ENCODE measurements at regions of chr3 and their contacts with region 1.

Region 1: DNA sequence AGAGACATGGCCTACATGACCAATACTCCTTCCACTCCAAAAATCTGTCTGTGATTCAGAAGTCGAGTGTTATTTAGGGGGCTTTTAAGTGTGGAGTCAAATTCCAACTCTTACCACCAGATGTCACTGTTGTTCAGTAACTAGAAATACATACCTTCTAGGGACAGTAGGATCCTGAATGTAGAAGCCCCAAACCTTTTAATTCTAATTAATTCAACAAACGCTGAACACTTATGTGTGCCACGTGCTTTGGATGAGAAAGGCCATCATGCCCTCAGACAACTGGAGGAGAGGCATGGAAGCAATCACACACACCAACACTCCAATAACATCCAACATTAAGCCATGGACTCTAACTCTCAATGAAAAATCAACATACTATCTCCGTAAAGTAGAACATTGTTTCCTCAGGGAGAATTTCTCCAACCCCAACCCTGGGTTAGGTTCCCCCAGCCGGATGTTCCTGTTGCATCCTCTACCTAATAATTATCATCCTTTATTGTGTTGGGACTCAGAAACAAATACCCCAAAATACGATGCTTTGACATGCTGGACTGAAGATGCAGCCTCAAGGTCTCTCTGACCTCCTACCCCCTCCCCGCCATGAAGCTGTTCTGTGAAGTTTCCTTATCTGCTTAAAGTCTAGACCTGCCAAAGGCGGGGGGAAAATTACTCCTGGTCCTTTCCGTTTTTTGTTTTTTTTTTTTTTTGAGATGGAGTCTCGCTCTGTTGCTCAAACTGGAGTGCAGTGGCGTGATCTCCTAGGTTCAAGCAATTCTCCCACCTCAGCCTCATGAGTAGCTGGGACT is 8.0 kb upstream of the CCDC13 start:
- DNase-seq: no peak
- H3K4me3 ChIP-seq: no peak overlapping the region
- H3K27me3 ChIP-seq: no peaks in the 10 kb centered on the region
- CTCF ChIP-seq: peak; percentile 68

Region 2: GRCh38 chr3:42190701-42191462 is 590.2 kb before region 1 on chr3:
- CTCF ChIA-PET with region 1: no interaction called
- POLR2A ChIA-PET with region 1: no interaction called
- DNase-seq: no peak
- H3K4me3 ChIP-seq: no peak overlapping the region
- H3K27me3 ChIP-seq: no peaks in the 10 kb centered on the region
- CTCF ChIP-seq: peak; percentile 89

Region 3: DNA sequence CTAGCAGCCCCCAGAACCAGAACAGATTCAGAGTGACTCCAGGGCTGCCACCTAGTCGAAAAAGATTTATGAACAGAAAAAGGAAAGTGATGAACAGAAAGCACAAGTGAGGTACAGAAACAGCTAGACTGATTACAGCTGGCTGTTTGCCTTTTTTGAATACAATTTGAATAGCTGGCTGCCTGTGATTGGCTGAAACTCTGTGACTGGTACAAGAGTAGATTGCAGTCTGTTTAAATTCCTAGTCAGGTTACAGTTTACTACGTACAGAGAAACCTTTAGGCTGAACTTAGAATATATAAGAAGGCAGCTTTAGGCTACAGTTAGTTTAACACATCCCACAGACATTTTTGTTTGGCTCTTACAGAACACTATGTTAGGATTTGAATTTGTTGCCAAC is 18.1 kb before region 1 on chr3:
- CTCF ChIA-PET with region 1: interaction called, 11 read pairs
- POLR2A ChIA-PET with region 1: no interaction called
- DNase-seq: no peak
- H3K4me3 ChIP-seq: no peak overlapping the region
- H3K27me3 ChIP-seq: peaks cover 11% of the 10 kb centered on the region; the same call in 1 of the 2 replicates
- CTCF ChIP-seq: no peak

Region 4: DNA sequence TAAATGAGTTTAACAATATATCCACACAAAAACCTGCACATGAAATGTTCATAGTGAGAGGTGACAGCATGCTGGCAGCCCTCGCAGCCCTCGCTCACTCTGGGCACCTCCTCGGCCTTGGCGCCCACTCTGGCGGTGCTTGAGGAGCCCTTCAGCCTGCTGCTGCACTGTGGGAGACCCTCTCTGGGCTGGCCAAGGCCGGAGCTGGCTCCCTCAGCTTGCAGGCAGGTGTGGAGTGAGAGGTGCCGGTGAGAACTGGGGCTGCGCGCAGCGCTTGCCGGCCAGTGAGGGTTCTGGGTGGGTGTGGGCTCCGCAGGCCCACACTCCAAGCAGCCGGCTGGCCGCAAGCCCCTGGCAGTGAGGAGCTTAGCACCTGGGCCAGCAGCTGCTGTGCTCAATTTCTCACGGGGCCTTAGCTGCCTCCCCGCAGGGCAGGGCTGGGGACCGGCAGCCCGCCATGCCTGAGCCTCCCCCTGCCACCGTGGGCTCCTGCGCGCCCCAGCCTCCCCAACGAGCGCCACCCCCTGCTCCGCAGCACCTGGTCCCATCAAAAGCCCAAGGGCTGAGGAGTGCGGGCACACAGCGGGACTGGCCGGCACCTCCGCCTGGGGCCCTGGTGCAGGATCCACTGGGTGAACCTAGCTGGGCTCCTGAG is 11.5 kb before region 1 on chr3:
- CTCF ChIA-PET with region 1: interaction called, 10 read pairs
- POLR2A ChIA-PET with region 1: no interaction called
- DNase-seq: no peak
- H3K4me3 ChIP-seq: no peak overlapping the region
- H3K27me3 ChIP-seq: peaks cover 8% of the 10 kb centered on the region; the same call in 1 of the 2 replicates
- CTCF ChIP-seq: no peak

Region 5: DNA sequence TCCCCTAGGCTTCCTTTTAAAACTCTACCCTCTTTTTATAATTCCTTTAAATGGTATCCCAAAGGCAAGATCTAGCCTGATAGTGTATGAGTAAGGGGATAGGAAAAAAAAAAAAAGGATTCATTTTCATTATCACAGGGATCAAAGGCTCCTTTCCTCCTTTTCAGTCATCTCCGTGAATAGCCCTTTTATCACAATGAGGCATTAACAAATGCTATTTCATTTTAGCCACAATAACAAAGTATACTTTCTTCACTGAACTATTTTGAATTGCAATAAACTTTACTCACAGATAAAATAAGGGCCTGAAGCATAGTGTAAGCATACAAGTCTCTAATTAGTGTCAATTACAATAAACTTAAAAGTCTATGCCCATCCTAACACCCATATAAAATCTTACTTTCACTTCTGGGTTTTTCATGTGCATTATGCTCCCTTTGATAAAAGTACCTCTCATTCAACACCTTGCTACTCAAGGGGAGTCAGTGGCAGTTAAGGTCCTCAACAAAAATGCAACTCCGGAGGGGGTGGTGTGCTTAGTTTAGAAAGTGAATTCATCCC is 14.6 kb after region 1 on chr3:
- CTCF ChIA-PET with region 1: interaction called, 10 read pairs
- POLR2A ChIA-PET with region 1: no interaction called
- DNase-seq: no peak
- H3K4me3 ChIP-seq: no peak overlapping the region
- H3K27me3 ChIP-seq: no peaks in the 10 kb centered on the region
- CTCF ChIP-seq: no peak

Region 6: GRCh38 chr3:42839616-42840015 is 58.5 kb after region 1 on chr3:
- CTCF ChIA-PET with region 1: interaction called, 28 read pairs
- POLR2A ChIA-PET with region 1: no interaction called
- DNase-seq: peak; percentile 9
- H3K4me3 ChIP-seq: no peak overlapping the region
- H3K27me3 ChIP-seq: 0 out of 2 replicates have a peak, but pooled peaks cover 2% of the 10 kb centered on the region
- CTCF ChIP-seq: peak; percentile 77

Measured in BJ (cell line).